Activated naive CD4-positive, alpha-beta T cell treated with anti-CD3 and anti-CD28 coated beads for 36 hours (primary cell): ENCODE measurements at regions of chr1 and their contacts with region 1.

Region 1: GRCh38 chr1:226736908-226737818 is 1.9 kb downstream of the ITPKB start:
- DNase-seq: peak; percentile 68
- H3K4me3 Mint-ChIP-seq: peak overlapping the region; percentile 77
- H3K27ac Mint-ChIP-seq: peak overlapping the region; percentile 98
- H3K4me1 Mint-ChIP-seq: peaks cover 38% of the 10 kb centered on the region
- H3K27me3 Mint-ChIP-seq: no peaks in the 10 kb centered on the region

Region 2: DNA sequence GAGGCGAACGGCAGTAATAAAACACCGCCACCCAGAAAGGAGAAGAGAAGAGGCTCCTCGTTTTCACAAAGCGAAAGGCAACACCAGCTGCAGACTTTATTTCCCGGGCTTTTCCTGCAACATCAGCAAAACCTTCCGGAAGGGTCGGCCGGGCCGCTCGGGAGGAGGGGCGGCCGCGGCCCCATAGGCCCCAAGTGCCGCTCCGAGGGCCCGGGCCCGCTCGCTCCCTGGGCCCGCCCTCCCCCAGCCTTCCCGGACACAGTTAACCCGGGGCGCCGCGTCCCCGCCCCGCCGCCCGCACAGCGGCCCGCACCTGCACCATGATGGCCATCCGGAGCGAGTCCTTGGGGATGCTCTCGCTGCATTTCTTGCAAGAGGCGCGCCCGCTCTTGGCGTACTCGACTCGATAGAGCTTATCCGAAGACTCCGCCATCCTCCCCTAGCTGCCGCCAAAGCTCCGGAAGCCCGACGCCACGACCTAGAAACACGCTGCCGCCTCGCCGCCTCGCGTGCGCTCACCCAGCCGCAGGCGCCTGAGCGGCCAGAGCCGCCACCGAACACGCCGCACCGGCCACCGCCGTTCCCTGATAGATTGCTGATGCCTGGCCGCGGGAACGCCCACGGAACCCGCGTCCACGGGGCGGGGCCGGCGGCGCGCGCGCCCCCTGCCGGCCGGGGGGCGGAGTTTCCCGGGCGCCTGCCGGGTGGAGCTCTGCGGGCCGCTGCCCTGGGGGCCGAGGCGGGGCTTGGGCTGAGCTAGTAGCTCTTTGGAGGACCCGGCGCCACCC is 329.5 kb before region 1 on chr1 and contains the start of gene PARP1:
- CTCF ChIA-PET with region 1: no interaction called
- intact Hi-C with region 1: loop called (anchors 5 kb)
- DNase-seq: peak; percentile 87
- H3K4me3 Mint-ChIP-seq: peak within 1 kb of the TSS; percentile 99
- H3K27ac Mint-ChIP-seq: peak within 1 kb of the TSS; percentile 98
- H3K4me1 Mint-ChIP-seq: peaks cover 39% of the 10 kb centered on the region
- H3K27me3 Mint-ChIP-seq: no peaks in the 10 kb centered on the region
- total RNA-seq, gene PARP1: 265 to 273 TPM

Region 3: DNA sequence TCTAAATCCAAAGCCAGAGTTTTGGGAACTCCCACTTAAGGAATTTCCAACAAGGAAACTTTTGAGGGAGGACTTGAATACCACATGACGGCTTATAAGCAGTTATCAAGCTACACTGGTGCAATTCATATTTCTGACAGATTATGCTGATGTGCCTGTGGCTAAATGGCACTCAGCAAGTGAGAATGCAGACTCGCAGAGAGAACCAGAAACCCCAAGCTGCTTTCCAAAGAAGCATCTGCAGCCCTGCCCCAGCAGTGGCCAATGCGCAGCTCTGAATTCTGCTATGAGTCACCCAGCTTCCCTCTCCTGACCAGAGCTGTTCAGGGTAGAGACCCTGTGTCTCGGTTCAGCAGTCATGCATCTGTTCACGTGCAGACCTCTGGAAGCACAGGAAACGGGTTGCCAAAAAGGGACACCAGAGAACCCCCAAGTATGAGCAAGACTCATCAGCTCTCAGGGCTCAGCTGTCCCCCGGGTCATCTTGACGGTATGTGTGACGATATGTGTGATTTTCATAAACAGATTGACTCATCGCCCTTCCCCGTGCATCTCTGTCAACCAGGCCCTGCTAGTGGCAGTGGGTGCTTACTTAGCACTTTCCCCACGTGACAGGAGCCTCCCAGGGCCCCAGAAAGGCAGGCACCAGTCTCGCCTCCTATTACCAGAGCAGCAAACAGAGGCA is 74.4 kb before region 1 on chr1:
- CTCF ChIA-PET with region 1: interaction called, 4 read pairs
- intact Hi-C with region 1: loop called (anchors 1 kb)
- DNase-seq: peak; percentile 95
- H3K4me3 Mint-ChIP-seq: peak overlapping the region; percentile 43
- H3K27ac Mint-ChIP-seq: peak overlapping the region; percentile 82
- H3K4me1 Mint-ChIP-seq: peaks cover 100% of the 10 kb centered on the region
- H3K27me3 Mint-ChIP-seq: no peaks in the 10 kb centered on the region

Region 4: GRCh38 chr1:226697151-226697939 is 39.8 kb before region 1 on chr1:
- CTCF ChIA-PET with region 1: interaction called, 3 read pairs
- intact Hi-C with region 1: loop called (anchors 1 kb)
- DNase-seq: peak; percentile 69
- H3K4me3 Mint-ChIP-seq: peak overlapping the region; percentile 28
- H3K27ac Mint-ChIP-seq: peak overlapping the region; percentile 96
- H3K4me1 Mint-ChIP-seq: peaks cover 93% of the 10 kb centered on the region
- H3K27me3 Mint-ChIP-seq: no peaks in the 10 kb centered on the region

Region 5: DNA sequence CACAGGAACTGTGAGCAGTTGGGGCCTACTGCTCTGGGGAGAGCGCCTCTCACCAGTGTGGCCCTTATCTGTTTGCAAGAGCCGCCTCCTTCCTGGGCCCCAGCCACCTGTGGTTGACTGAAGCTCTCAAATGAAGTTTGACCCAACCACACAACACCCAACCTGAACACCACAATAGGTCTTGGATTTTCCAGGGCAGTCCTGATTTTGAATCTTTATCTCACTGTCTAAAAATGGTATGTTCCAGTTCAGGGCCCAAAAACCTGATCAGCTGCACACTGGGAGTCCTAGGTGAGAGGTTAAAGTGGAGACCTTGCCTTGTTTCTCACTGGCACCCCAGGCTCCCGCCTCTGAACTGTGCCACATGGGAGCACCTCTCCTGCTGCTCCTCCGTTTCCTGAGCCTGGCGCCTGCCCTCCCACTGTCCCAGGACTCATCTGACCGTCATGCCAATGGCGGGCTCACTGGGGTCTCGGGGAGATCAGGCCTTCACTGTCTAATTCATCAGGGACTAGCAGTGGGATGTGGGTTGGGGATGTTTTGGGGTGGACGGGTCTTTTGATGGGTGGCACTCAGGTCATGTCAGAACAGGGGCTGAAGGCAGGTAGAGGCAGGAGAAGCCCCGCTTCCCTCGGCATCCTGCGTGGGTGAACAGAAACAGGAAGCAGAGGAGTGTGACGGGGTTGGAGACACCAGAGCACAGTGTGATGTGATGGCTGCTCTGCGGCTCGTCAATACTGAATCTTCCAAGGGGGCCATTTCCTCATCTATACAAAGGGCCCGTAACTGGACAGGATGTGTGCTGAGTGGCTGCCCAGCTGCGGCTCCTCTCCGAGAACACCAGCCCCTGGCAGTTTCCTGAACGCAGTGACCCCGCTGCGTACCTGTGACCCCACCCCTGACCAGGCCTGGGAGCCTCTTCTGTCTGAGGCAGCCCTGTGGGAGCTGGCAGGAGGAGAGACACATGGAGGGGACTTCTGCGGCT is 61.6 kb after region 1 on chr1:
- CTCF ChIA-PET with region 1: no interaction called
- intact Hi-C with region 1: loop called (anchors 1 kb)
- DNase-seq: peak; percentile 80
- H3K4me3 Mint-ChIP-seq: peak overlapping the region; percentile 46
- H3K27ac Mint-ChIP-seq: peak overlapping the region; percentile 82
- H3K4me1 Mint-ChIP-seq: peaks cover 29% of the 10 kb centered on the region
- H3K27me3 Mint-ChIP-seq: no peaks in the 10 kb centered on the region

Region 6: DNA sequence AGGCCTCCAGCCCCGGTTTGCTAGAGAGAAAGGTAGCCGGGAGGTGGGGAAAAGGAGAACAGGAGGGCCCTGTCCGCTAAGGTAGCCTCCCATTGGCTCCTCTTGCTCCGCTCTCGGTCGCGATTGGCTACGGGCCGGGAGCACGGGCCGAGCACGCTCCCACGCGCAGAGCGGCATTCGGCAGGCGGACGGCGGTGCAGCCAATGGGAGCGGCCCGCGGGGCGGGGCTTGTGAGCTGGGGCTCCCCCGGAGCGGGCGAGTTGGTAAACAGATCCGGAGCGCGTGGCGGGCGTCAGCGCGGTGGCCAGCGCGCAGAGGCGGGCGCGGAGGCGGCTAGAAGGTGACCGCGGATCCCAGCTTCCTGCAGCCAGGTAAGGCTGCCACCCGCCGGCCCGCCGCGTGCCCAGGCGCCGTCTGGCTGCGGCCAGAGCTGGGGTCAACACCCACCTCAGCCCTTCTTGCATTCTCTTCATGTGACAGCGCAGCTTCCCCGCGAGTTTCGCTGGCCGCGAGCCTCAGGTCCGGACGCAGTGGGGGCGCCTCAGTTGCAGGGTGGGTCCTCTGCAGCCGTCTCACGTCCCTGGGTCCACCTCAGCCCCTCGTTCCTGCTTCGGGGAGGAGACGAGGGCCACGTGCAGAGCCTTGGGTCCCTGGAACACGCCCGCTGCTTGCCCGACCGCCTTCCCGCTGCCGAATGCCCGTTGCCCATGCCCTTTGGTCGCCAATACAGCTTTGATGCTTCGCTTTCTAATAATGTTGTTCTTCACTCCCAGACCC is 203.1 kb after region 1 on chr1 and contains the start of gene COQ8A:
- CTCF ChIA-PET with region 1: no interaction called
- intact Hi-C with region 1: loop called (anchors 5 kb)
- DNase-seq: peak; percentile 99
- H3K4me3 Mint-ChIP-seq: peak within 1 kb of the TSS; percentile 82
- H3K27ac Mint-ChIP-seq: peak within 1 kb of the TSS; percentile 90
- H3K4me1 Mint-ChIP-seq: peaks cover 48% of the 10 kb centered on the region
- H3K27me3 Mint-ChIP-seq: no peaks in the 10 kb centered on the region
- total RNA-seq, gene COQ8A: 24.8 to 26.5 TPM